ENCODE measurements at regions of chr7 and their contacts with region 1.

Region 1: GRCh38 chr7:131945313-131945911 is 389.0 kb upstream of the PODXL start:
- H3K4me3 ChIP-seq: no peak overlapping the region
- H3K27ac ChIP-seq: no peak overlapping the region
- H3K4me1 ChIP-seq: no peaks in the 10 kb centered on the region
- CTCF ChIP-seq: peak; percentile 84

Region 2: DNA sequence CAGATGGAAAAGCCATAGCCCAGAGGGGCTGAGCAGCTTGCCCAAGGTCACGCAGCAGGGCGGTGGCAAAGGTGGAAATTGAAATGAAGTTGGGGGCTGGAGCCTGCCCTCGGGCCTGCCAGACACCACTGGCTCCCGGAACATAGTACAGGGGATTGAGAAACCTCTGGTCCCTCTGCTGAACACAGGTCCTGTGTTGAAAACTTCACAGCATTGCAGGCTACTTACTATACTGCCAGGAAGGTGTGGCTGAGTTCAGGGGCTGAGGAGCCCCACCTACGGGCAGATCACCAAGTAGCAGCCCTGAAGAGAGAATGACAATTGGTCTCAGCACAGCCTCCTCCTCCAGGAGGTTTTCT is 304.2 kb after region 1 on chr7:
- CTCF ChIA-PET with region 1: interaction called, 11 read pairs
- POLR2A ChIA-PET with region 1: no interaction called
- H3K4me3 ChIP-seq: no peak overlapping the region
- H3K27ac ChIP-seq: no peak overlapping the region
- H3K4me1 ChIP-seq: peaks cover 3% of the 10 kb centered on the region; the same call in 1 of the 2 replicates
- CTCF ChIP-seq: peak; percentile 41; the same call in 1 of the 2 replicates